ENCODE measurements at regions of chr17 and their contacts with region 1.

Region 1: DNA sequence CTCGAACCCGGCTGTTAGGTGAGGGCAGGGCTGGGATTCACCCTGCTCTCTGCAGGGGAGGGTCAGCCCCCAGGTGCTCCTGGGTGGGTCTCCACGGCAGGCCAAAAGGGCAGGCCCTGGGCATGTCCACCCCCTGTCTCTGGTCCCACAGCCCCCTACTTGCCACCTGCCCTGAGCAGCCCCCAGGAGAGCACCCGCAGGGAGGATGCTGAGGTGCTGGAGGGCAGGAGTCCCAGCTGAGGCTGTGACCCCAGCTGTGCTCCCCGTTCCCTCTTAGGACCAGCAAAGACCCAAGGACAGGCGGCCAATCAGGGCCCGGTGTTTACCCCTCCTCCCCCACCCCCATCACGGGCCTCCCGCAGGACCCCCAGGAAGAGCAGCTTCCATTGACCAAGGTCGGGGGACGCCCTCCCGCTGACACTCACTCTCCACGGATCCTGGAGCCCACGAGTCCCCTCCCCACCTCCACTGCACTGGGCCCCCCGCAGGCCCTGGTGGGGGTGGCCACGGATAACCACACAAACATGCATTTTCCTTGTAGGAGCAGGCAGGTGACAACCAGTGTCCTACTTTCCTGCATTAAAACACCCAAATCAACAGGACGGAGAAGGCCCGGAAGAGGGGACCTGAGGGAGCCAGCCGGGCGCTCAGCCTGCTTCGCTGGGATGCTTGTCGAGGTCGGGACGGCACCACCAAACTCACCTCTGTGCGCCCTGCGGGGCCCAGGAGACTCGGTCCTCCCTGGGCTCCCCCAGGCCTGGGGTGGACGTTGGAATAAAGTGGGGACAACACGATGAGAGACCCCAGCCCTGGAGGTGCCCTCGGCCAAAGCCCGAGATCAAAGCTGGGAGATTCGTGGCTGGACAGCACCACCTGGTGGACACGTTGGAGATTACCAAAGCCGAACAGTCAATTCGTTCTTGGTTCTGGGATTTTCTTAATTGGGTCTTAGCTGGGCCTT is 22.5 kb upstream of the ENPP7 start:
- DNase-seq: peak; percentile 34
- ATAC-seq: peak; percentile 80
- H3K4me3 ChIP-seq: no peak overlapping the region
- H3K27ac ChIP-seq: no peak overlapping the region; the same call in 1 of the 2 replicates
- H3K4me1 ChIP-seq: no peaks in the 10 kb centered on the region; a peak in 1 of 4 replicates
- H3K27me3 ChIP-seq: no peaks in the 10 kb centered on the region
- CTCF ChIP-seq: peak; percentile 81 to 86 (median 81)
- POLR2A ChIP-seq: no peak
- RAD21 ChIP-seq: peak; percentile 92

Region 2: DNA sequence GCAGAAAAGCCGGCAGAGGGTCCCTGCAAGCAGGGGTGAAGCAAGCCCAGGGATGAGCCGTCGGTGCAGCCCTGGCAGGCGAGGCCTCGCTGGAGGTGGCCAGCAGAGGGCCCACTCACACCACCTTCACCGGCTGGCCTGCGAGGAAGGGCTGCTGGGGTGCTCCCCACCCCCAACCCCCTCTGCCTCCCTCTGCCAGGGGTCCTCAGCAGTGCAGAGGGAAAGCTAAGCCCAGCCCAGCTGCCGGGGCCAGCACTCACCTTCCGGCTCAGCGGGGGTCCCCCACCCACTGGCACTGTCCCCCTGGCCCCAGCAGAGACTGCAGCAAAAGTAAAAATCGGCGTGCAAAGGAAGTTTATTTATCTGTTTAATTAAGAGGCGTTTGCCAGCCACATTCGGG is 520.2 kb before region 1 on chr17:
- CTCF ChIA-PET with region 1: interaction called, 3 read pairs
- POLR2A ChIA-PET with region 1: no interaction called
- RAD21 ChIA-PET with region 1: no interaction called
- intact Hi-C with region 1: loop called (anchors 5 kb)
- DNase-seq: peak; percentile 10
- ATAC-seq: peak; percentile 88
- H3K4me3 ChIP-seq: no peak overlapping the region
- H3K27ac ChIP-seq: no peak overlapping the region
- H3K4me1 ChIP-seq: no peaks in the 10 kb centered on the region
- H3K27me3 ChIP-seq: peaks cover 84% of the 10 kb centered on the region
- CTCF ChIP-seq: peak; percentile 81 to 92 (median 89)
- POLR2A ChIP-seq: no peak
- RAD21 ChIP-seq: peak; percentile 91

Region 3: DNA sequence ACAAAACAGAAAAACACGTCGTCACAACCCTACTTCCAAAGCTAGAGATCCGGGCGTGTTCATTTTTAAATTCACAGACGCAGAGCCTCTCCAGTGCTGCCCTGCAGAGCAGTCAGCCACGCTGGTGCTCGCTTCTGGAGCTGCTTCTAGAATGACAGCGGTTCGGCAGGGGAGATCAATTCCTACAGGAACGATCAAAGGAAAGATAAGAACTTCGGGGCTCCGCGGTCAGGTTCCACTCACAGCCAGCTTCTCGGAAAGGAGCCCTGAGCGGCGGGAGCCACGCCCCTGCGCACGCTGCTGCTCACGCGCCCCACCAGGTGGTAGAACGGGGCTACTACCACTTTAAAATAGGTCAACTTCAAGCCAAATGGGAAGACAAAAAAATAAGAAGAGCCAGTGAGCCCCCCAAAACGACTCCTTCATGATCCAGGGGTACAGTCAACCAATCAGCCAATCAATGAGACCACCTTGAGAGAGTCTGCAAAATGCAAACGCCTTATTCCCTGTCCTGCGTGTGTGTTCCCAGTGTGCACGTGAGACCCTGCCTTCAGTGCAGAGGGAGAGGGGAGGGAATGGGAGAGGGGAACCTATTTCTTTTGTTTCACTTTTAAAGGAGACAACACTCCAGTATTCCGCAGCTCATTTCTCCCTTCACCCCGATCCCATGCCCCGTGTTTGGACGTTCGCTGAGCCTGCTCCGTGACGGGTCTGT is 307.1 kb before region 1 on chr17:
- CTCF ChIA-PET with region 1: interaction called, 29 read pairs
- POLR2A ChIA-PET with region 1: no interaction called
- RAD21 ChIA-PET with region 1: interaction called, 3 to 5 read pairs
- intact Hi-C with region 1: loop called (anchors 2 kb)
- DNase-seq: peak; percentile 44
- ATAC-seq: peak; percentile 93
- H3K4me3 ChIP-seq: peak overlapping the region; percentile 38 to 43
- H3K27ac ChIP-seq: no peak overlapping the region
- H3K4me1 ChIP-seq: peaks cover 4 to 10% of the 10 kb centered on the region in 2 experiments; a peak in 2 of 4 replicates
- H3K27me3 ChIP-seq: peaks cover 23% of the 10 kb centered on the region
- CTCF ChIP-seq: peak; percentile 75 to 97 (median 97)
- POLR2A ChIP-seq: no peak
- RAD21 ChIP-seq: peak; percentile 60

Region 4: DNA sequence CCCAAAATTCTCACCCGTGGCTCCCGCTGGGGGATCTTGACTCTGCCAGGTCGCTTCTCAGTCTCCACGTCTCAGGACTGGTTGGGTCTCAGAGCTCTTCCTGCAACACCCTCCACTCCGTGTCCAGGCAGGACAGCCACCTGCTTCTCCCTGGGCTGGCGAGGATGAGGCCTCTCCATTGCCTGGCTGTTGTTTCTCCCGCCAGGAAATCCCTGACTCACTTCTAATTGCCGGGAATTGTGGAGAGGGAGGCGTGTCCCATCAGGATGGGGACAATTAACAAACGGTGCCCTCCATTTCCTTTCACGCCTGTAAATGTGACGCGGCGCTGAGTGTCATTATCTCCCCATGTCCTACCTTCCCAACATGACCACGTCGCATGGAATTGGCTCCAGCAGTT is 301.9 kb before region 1 on chr17:
- CTCF ChIA-PET with region 1: interaction called, 29 read pairs
- POLR2A ChIA-PET with region 1: no interaction called
- RAD21 ChIA-PET with region 1: no interaction called
- intact Hi-C with region 1: loop called (anchors 2 kb)
- DNase-seq: no peak
- ATAC-seq: no peak
- H3K4me3 ChIP-seq: no peak overlapping the region
- H3K27ac ChIP-seq: no peak overlapping the region
- H3K4me1 ChIP-seq: peaks cover 0 to 2% of the 10 kb centered on the region in 2 experiments; a peak in 1 of 4 replicates
- H3K27me3 ChIP-seq: peaks cover 57% of the 10 kb centered on the region
- CTCF ChIP-seq: no peak
- POLR2A ChIP-seq: no peak
- RAD21 ChIP-seq: no peak

Region 5: GRCh38 chr17:79414793-79415065 is 293.5 kb before region 1 on chr17:
- CTCF ChIA-PET with region 1: no interaction called
- POLR2A ChIA-PET with region 1: no interaction called
- RAD21 ChIA-PET with region 1: no interaction called
- intact Hi-C with region 1: loop called (anchors 5 kb)
- DNase-seq: no peak
- ATAC-seq: no peak
- H3K4me3 ChIP-seq: no peak overlapping the region
- H3K27ac ChIP-seq: no peak overlapping the region
- H3K4me1 ChIP-seq: no peaks in the 10 kb centered on the region
- H3K27me3 ChIP-seq: peaks cover 78% of the 10 kb centered on the region
- CTCF ChIP-seq: no peak
- POLR2A ChIP-seq: no peak
- RAD21 ChIP-seq: no peak

Region 6: GRCh38 chr17:79612468-79613194 is 95.6 kb before region 1 on chr17:
- CTCF ChIA-PET with region 1: interaction called, 3 read pairs
- POLR2A ChIA-PET with region 1: no interaction called
- RAD21 ChIA-PET with region 1: interaction called in 1 of 2 experiments, 3 read pairs
- intact Hi-C with region 1: loop called (anchors 5 kb)
- DNase-seq: peak; percentile 63
- ATAC-seq: peak; percentile 84
- H3K4me3 ChIP-seq: no peak overlapping the region
- H3K27ac ChIP-seq: no peak overlapping the region
- H3K4me1 ChIP-seq: no peaks in the 10 kb centered on the region
- H3K27me3 ChIP-seq: peaks cover 32% of the 10 kb centered on the region
- CTCF ChIP-seq: peak; percentile 80 to 100 (median 99)
- POLR2A ChIP-seq: no peak
- RAD21 ChIP-seq: peak; percentile 93

Region 7: GRCh38 chr17:79796763-79797491 is 88.7 kb after region 1 on chr17 and contains the start of gene CBX8:
- CTCF ChIA-PET with region 1: no interaction called
- POLR2A ChIA-PET with region 1: no interaction called
- RAD21 ChIA-PET with region 1: no interaction called
- intact Hi-C with region 1: no loop called
- DNase-seq: peak; percentile 100
- ATAC-seq: peak; percentile 77
- H3K4me3 ChIP-seq: peak within 1 kb of the TSS; percentile 80 to 92
- H3K27ac ChIP-seq: peak within 1 kb of the TSS; percentile 90
- H3K4me1 ChIP-seq: peaks cover 41 to 62% of the 10 kb centered on the region in 2 experiments
- H3K27me3 ChIP-seq: no peaks in the 10 kb centered on the region
- CTCF ChIP-seq: no peak
- POLR2A ChIP-seq: peak; percentile 72
- RAD21 ChIP-seq: no peak
- total RNA-seq, gene CBX8: 29.0 TPM

Region 8: DNA sequence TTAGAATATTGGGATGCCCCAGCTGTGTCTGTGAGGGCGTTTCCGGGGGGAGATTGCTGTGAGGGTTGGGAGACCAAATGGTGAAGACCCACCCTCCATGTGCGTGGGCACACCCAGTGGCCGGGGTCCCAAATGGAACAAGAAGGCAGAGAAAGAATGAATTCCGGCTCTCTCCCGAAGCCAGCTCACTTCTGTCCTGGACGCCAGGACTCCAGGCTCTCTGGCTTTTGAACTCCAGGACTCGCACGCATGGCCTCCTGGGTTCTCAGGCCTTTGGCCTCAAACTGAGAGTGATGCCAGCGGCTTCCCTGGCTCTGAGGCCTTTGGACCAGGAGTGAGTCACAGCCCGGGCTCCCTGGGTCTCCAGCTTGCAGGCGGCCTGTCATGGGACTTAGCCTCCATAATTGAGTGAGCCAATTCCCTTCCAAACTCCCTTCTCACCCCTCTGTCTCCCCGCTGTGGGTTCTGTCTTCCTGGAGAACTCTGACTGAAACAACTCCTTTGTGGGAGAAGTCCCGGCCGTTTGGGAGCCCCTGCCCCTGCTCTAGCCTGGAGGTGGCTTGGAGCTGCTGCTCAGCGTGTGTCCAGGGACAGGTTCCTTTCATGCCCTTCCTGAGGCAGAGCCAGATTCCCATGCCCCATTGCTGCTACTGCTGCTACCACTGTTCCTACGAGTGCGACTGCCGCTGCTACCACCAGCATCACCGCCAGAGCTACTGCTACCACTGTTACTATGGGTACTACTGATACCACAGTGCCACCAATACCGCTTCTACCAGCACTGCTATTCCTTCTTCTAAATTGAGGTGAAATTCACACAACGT is 180.8 kb after region 1 on chr17:
- CTCF ChIA-PET with region 1: no interaction called
- POLR2A ChIA-PET with region 1: no interaction called
- RAD21 ChIA-PET with region 1: no interaction called
- intact Hi-C with region 1: no loop called
- DNase-seq: no peak
- ATAC-seq: no peak
- H3K4me3 ChIP-seq: no peak overlapping the region
- H3K27ac ChIP-seq: no peak overlapping the region
- H3K4me1 ChIP-seq: peaks cover 0 to 12% of the 10 kb centered on the region in 2 experiments; a peak in 2 of 4 replicates
- H3K27me3 ChIP-seq: peaks cover 16% of the 10 kb centered on the region; the same call in 1 of the 2 replicates
- CTCF ChIP-seq: no peak
- POLR2A ChIP-seq: no peak
- RAD21 ChIP-seq: no peak